Activated naive CD4-positive, alpha-beta T cell treated with anti-CD3 and anti-CD28 coated beads for 36 hours (primary cell): ENCODE measurements at regions of chr14 and their contacts with region 1.

Region 1: GRCh38 chr14:66495218-66496098 is 9.3 kb downstream of the CCDC196 start:
- DNase-seq: peak; percentile 56
- H3K4me3 Mint-ChIP-seq: no peak overlapping the region
- H3K27ac Mint-ChIP-seq: no peak overlapping the region
- H3K4me1 Mint-ChIP-seq: peaks cover 19% of the 10 kb centered on the region
- H3K27me3 Mint-ChIP-seq: no peaks in the 10 kb centered on the region

Region 2: GRCh38 chr14:66330916-66331315 is 164.5 kb before region 1 on chr14:
- CTCF ChIA-PET with region 1: no interaction called
- intact Hi-C with region 1: no loop called
- DNase-seq: no peak
- H3K4me3 Mint-ChIP-seq: no peak overlapping the region
- H3K27ac Mint-ChIP-seq: no peak overlapping the region
- H3K4me1 Mint-ChIP-seq: no peaks in the 10 kb centered on the region
- H3K27me3 Mint-ChIP-seq: no peaks in the 10 kb centered on the region

Region 3: GRCh38 chr14:66403183-66403582 is 92.3 kb before region 1 on chr14:
- CTCF ChIA-PET with region 1: no interaction called
- intact Hi-C with region 1: loop called (anchors 5 kb)
- DNase-seq: no peak
- H3K4me3 Mint-ChIP-seq: no peak overlapping the region
- H3K27ac Mint-ChIP-seq: no peak overlapping the region
- H3K4me1 Mint-ChIP-seq: peaks cover 4% of the 10 kb centered on the region
- H3K27me3 Mint-ChIP-seq: no peaks in the 10 kb centered on the region

Region 4: GRCh38 chr14:66514213-66514612 is 18.8 kb after region 1 on chr14:
- CTCF ChIA-PET with region 1: no interaction called
- intact Hi-C with region 1: no loop called
- DNase-seq: no peak
- H3K4me3 Mint-ChIP-seq: no peak overlapping the region
- H3K27ac Mint-ChIP-seq: no peak overlapping the region
- H3K4me1 Mint-ChIP-seq: peaks cover 22% of the 10 kb centered on the region
- H3K27me3 Mint-ChIP-seq: peaks cover 7% of the 10 kb centered on the region

Region 5: GRCh38 chr14:66543996-66544395 is 48.5 kb after region 1 on chr14:
- CTCF ChIA-PET with region 1: no interaction called
- intact Hi-C with region 1: loop called (anchors 1 kb)
- DNase-seq: no peak
- H3K4me3 Mint-ChIP-seq: no peak overlapping the region
- H3K27ac Mint-ChIP-seq: no peak overlapping the region
- H3K4me1 Mint-ChIP-seq: peaks cover 4% of the 10 kb centered on the region
- H3K27me3 Mint-ChIP-seq: no peaks in the 10 kb centered on the region

Region 6: DNA sequence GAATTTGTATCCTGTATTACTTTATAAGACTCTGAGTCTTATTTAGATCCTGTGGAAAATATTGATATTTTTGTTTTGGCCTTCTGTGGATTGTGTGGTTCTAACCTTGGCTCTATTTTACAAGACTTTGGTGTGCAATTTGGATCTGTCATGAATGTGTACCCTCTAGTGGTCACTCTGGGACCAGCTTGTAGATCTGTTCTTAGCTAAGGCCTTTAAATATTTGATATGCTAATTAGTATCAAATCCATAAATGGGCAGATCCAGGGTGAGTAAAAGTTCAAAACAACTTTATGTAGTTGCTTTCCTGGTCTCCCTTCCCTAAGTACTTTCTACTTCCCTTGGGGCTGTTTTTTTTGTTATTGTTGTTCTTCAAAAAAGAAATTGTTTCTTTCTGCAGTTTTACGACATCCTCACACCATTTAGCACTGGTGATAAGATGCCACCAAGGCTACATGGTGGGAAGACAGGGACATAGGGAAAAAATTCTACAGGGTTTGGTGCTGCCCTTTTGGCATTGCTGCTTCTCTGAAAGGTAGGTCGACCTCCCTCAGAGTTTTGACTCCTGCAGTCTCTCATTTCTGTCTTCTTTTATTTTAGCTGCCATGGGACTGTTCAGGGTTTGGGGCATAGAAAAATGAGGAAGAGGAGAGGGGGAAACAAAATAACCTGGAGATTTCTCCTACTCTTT is 251.0 kb after region 1 on chr14:
- CTCF ChIA-PET with region 1: no interaction called
- intact Hi-C with region 1: loop called (anchors 1 kb)
- DNase-seq: peak; percentile 6
- H3K4me3 Mint-ChIP-seq: no peak overlapping the region
- H3K27ac Mint-ChIP-seq: no peak overlapping the region
- H3K4me1 Mint-ChIP-seq: no peaks in the 10 kb centered on the region
- H3K27me3 Mint-ChIP-seq: no peaks in the 10 kb centered on the region

Region 7: GRCh38 chr14:67111022-67111421 is 615.6 kb after region 1 on chr14:
- CTCF ChIA-PET with region 1: no interaction called
- intact Hi-C with region 1: loop called (anchors 5 kb)
- DNase-seq: no peak
- H3K4me3 Mint-ChIP-seq: no peak overlapping the region
- H3K27ac Mint-ChIP-seq: no peak overlapping the region
- H3K4me1 Mint-ChIP-seq: no peaks in the 10 kb centered on the region
- H3K27me3 Mint-ChIP-seq: no peaks in the 10 kb centered on the region

Region 8: GRCh38 chr14:67280506-67280905 is 785.0 kb after region 1 on chr14:
- CTCF ChIA-PET with region 1: interaction called, 3 read pairs
- intact Hi-C with region 1: loop called (anchors 5 kb)
- DNase-seq: no peak
- H3K4me3 Mint-ChIP-seq: no peak overlapping the region
- H3K27ac Mint-ChIP-seq: no peak overlapping the region
- H3K4me1 Mint-ChIP-seq: peaks cover 6% of the 10 kb centered on the region
- H3K27me3 Mint-ChIP-seq: no peaks in the 10 kb centered on the region